Cardiac septum (tissue), 1 donor: ENCODE measurements at regions of chr11 and their contacts with region 1.

Region 1: GRCh38 chr11:96235751-96236150 is 107.2 kb downstream of the MAML2 start:
- DNase-seq: no peak

Region 2: DNA sequence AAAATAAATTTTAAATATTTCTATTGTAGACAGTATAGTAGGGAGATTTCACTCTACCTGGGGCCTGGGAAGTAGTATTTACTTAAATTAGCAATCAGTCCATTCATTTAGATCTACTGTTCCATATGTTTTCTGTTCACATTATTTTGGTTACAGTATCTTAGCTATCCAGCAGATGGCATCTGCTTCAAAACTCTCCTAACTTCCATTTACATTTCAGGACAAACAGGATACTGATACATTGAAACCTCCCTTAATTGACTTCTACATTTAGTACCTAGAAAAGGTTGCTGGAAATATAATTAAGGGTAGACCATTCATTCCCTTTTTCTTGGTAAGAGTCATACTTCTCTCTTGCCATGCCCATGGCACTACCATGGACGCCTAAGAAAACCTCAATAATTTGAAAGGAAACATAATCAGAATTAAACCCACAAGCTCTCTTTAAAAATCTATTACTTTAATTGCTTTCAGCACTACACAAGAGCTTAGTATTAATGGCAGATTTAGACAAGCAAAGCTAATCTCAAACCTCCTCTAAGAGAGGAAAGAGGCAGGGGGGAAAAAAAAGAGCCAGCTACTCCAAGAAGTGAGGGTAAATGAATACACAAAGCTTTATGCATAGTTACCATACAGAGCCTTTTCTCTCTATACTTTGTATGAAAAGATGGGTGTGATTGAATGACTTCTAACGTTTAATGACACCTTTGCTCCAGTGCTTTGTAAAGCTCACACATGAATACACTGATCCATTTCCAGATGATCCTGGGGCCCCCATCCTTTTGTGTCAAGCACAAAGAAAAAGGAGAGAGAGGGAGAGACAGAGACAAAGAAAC is 180.7 kb before region 1 on chr11:
- intact Hi-C with region 1: loop called (anchors 10 kb)
- DNase-seq: no peak